ENCODE measurements at regions of chr17 and their contacts with region 1.

Region 1: DNA sequence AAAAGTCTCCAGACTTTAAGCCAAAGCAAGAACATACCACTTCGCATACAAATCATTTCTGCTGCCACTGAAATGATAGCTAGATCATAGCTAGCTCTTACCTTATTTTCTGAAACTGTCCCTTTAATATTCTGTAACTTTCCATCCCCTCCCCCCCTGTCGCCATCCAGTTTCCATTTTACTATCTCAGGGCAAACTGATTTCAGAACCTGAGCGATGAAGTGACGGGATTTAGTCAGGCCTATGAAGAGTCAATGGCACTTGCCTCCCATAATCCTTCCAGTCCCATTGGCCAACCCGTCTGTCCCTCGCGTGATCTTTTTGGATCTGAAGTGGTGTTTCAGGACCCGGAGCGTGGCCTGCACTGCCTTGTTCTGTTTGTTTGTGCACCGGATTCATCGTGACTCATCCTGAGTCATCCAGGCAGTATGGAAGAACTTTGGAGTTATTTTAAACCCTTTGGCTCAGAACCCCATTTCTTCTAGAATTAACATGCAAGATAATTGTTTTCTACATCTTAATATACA is 199.8 kb upstream of the CHMP6 start:
- DNase-seq: peak in 6 of 14 experiments; percentile 19 to 70 (median 47)
- ATAC-seq: peak; percentile 17
- H3K4me3 ChIP-seq: peak overlapping the region; percentile 17
- H3K4me3 Mint-ChIP-seq: peak overlapping the region; percentile 83
- H3K27ac ChIP-seq: peak overlapping the region; percentile 22 to 73
- H3K27ac Mint-ChIP-seq: peak overlapping the region; percentile 99
- H3K4me1 ChIP-seq: peaks cover 57% of the 10 kb centered on the region
- H3K4me1 Mint-ChIP-seq: peaks cover 81% of the 10 kb centered on the region
- H3K27me3 ChIP-seq: no peaks in the 10 kb centered on the region
- H3K27me3 Mint-ChIP-seq: no peaks in the 10 kb centered on the region
- CTCF ChIP-seq: no peak

Region 2: DNA sequence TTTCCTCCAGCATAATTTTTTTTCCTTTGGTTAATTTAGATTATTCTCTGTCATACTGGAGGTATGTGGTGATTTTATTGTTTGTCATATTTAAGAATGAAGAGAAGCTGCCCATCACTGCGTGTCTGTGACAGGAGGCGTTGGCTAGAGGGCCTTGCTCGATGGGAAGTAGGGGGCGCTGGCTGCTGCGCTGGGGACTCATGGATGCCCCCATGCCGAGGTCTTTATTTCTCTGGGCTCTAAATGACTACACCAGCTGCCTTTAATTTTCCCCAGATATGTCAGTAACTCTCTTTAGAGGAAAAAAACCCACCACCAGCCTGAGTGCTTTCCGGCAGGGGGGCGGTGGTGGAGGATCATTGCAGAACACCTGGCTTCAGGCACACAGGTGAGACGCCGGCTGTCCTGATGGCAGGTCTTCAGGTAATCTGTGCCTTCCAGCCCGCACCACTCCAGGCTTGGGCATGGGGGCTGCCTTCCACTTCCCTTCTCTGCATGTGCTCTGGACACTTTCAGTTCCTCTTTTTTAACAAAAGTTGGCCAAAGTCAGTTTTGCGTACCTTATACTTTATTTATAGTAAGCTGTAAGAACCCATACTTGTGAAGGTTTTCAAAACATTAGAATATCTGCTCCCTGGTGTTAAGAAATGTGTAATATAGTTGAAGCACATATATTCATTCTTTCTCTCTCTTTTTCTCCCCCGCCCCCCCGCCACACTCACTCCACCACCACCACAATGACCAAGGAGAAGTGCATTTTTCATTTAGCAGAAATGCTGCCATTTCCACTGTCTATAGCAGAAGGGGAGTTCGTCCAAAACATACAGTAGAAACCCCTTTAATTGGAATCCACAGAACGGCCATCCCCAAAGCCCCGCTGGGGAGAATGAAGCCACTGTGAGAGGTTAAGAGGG is 54.5 kb before region 1 on chr17:
- CTCF ChIA-PET with region 1: no interaction called
- POLR2A ChIA-PET with region 1: interaction called, 4 read pairs
- intact Hi-C with region 1: loop called in 1 of 2 experiments (anchors 10 kb)
- DNase-seq: peak in 1 of 14 experiments; percentile 40
- ATAC-seq: no peak
- H3K4me3 ChIP-seq: no peak overlapping the region
- H3K4me3 Mint-ChIP-seq: no peak overlapping the region
- H3K27ac ChIP-seq: no peak overlapping the region
- H3K27ac Mint-ChIP-seq: peak overlapping the region; percentile 65
- H3K4me1 ChIP-seq: peaks cover 22% of the 10 kb centered on the region
- H3K4me1 Mint-ChIP-seq: peaks cover 57% of the 10 kb centered on the region
- H3K27me3 ChIP-seq: no peaks in the 10 kb centered on the region
- H3K27me3 Mint-ChIP-seq: no peaks in the 10 kb centered on the region
- CTCF ChIP-seq: no peak

Region 3: DNA sequence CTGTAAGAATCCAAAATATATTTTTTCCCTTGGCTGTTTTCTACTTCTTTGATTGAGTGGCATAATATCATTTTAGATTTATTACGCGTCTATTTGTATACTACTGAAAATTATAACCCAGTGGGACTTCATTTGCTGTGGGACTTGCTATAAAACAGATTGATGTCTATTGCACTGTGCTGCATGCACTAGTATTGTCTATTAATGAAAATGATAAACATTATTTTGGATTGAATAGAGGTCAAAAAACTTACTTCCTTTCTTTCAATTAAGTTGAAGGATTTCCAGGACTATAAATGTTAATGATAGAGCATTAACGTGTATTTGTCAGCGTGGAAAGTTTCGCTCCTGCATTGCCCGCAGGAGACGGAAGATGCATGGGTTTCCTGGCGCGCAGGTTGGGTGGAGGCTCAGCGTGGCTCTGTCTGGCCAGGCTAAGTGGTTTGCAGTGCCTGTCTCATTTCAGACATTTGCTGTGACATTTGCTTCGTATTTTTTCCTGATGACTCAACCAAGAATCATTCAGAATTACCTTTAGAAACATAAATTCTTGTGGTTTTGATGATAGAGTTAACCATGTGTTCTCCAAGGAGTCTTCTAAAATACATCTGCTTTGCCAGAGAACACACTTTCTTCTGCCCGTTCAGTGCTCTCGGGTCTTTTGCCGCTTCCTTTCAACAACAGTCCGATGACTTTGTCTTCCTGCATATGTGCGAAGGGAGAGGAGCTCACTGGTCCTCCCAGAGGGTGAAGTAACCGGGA is 30.5 kb before region 1 on chr17:
- CTCF ChIA-PET with region 1: interaction called, 6 read pairs
- POLR2A ChIA-PET with region 1: interaction called, 8 read pairs
- intact Hi-C with region 1: loop called in 1 of 2 experiments (anchors 2 kb)
- DNase-seq: peak; percentile 22 to 85 (median 68)
- ATAC-seq: peak; percentile 74
- H3K4me3 ChIP-seq: peak overlapping the region; percentile 7
- H3K4me3 Mint-ChIP-seq: peak overlapping the region; percentile 81
- H3K27ac ChIP-seq: peak overlapping the region; percentile 49 to 67
- H3K27ac Mint-ChIP-seq: peak overlapping the region; percentile 91
- H3K4me1 ChIP-seq: peaks cover 67% of the 10 kb centered on the region
- H3K4me1 Mint-ChIP-seq: peaks cover 84% of the 10 kb centered on the region
- H3K27me3 ChIP-seq: no peaks in the 10 kb centered on the region
- H3K27me3 Mint-ChIP-seq: no peaks in the 10 kb centered on the region
- CTCF ChIP-seq: no peak

Region 4: GRCh38 chr17:80773243-80773991 is 18.4 kb before region 1 on chr17:
- CTCF ChIA-PET with region 1: no interaction called
- POLR2A ChIA-PET with region 1: interaction called, 41 read pairs
- intact Hi-C with region 1: no loop called
- DNase-seq: peak in 1 of 14 experiments; percentile 45
- ATAC-seq: peak; percentile 81
- H3K4me3 ChIP-seq: no peak overlapping the region
- H3K4me3 Mint-ChIP-seq: peak overlapping the region; percentile 70
- H3K27ac ChIP-seq: no peak overlapping the region
- H3K27ac Mint-ChIP-seq: peak overlapping the region; percentile 91
- H3K4me1 ChIP-seq: peaks cover 39% of the 10 kb centered on the region
- H3K4me1 Mint-ChIP-seq: peaks cover 84% of the 10 kb centered on the region
- H3K27me3 ChIP-seq: no peaks in the 10 kb centered on the region
- H3K27me3 Mint-ChIP-seq: no peaks in the 10 kb centered on the region
- CTCF ChIP-seq: no peak

Region 5: DNA sequence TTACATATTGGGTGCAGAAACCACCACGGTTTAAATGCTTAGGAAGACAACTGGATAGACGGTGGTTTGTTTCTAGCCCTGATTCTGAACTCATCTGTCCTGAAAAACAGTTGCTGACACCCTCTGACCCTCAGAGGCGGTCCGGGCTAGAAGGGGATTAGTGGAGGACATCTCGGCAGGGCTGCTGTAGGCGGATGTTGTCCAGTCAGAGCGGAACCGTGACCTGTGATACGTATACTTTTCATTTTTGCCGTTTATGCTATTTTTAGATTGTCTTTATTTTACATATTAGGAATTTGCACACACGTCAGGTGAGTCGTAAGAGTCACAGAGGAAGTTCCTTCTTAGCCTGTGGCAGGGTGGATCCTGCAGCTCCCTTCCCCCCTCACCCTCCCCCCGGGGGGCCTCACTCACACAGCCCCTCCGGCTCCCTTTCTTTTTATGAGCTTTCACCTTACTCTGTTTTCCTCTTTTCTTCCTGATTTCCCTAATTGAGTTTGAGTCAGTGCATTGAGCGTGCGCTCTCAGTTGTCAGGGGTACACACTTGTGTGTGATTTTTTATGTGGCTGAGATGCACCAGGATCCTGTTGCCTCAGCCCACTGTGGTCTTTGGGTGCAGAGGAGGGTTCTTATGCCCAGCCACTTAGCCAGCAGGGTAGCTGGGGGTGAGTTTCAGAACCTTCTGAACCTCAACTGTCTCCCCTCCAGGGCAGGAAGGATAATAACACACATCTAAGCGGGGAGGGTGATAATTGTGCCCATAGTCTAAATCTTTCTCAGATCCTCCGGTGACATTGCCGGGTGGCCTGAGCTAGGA is 11.2 kb before region 1 on chr17:
- CTCF ChIA-PET with region 1: interaction called, 6 read pairs
- POLR2A ChIA-PET with region 1: interaction called, 57 read pairs
- intact Hi-C with region 1: loop called in 1 of 2 experiments (anchors 1 kb)
- DNase-seq: peak in 3 of 14 experiments; percentile 50 to 67 (median 50)
- ATAC-seq: peak; percentile 54
- H3K4me3 ChIP-seq: peak overlapping the region; percentile 32
- H3K4me3 Mint-ChIP-seq: peak overlapping the region; percentile 36
- H3K27ac ChIP-seq: peak overlapping the region; percentile 55 to 75
- H3K27ac Mint-ChIP-seq: peak overlapping the region; percentile 85
- H3K4me1 ChIP-seq: peaks cover 58% of the 10 kb centered on the region
- H3K4me1 Mint-ChIP-seq: peaks cover 76% of the 10 kb centered on the region
- H3K27me3 ChIP-seq: no peaks in the 10 kb centered on the region
- H3K27me3 Mint-ChIP-seq: no peaks in the 10 kb centered on the region
- CTCF ChIP-seq: no peak

Region 6: DNA sequence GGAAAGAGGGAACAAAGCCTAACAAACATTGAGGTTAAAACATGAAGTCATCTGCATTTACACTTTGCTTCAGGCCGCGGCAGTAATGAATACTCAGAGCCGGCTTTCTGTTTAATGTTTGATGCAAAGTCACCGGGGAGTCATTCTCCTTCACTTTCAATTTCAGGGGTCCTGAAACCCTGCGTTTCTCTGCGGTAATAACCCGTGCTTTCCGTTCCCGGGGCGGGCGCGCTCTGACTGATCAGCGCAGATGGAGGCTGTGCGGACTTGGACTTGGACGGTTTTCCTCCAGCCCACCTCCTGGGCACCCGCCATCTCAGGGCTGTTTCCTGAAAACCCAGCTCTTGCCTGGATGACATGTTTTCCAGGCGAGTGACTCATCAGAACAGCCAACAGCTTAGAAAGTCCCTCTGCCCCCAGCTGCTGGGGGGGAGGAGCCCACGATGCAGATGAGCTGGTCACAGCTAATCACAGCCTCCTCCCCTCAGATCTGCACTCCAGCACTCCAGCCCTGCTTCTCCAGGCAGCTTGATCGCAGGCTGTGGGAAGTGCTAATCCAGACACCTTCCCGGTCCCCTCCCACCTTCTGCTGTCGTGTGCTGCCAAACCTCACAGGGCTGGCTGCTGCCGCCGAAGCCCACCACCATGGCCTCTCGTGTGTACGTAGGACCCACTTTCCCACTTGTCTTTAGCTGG is 41.2 kb after region 1 on chr17:
- CTCF ChIA-PET with region 1: no interaction called
- POLR2A ChIA-PET with region 1: interaction called, 10 read pairs
- intact Hi-C with region 1: loop called in 1 of 2 experiments (anchors 5 kb)
- DNase-seq: peak; percentile 43 to 87 (median 66)
- ATAC-seq: peak; percentile 92
- H3K4me3 ChIP-seq: peak overlapping the region; percentile 55
- H3K4me3 Mint-ChIP-seq: peak overlapping the region; percentile 74
- H3K27ac ChIP-seq: peak overlapping the region; percentile 70 to 73
- H3K27ac Mint-ChIP-seq: peak overlapping the region; percentile 90
- H3K4me1 ChIP-seq: peaks cover 23% of the 10 kb centered on the region
- H3K4me1 Mint-ChIP-seq: peaks cover 35% of the 10 kb centered on the region
- H3K27me3 ChIP-seq: no peaks in the 10 kb centered on the region
- H3K27me3 Mint-ChIP-seq: no peaks in the 10 kb centered on the region
- CTCF ChIP-seq: no peak

Region 7: DNA sequence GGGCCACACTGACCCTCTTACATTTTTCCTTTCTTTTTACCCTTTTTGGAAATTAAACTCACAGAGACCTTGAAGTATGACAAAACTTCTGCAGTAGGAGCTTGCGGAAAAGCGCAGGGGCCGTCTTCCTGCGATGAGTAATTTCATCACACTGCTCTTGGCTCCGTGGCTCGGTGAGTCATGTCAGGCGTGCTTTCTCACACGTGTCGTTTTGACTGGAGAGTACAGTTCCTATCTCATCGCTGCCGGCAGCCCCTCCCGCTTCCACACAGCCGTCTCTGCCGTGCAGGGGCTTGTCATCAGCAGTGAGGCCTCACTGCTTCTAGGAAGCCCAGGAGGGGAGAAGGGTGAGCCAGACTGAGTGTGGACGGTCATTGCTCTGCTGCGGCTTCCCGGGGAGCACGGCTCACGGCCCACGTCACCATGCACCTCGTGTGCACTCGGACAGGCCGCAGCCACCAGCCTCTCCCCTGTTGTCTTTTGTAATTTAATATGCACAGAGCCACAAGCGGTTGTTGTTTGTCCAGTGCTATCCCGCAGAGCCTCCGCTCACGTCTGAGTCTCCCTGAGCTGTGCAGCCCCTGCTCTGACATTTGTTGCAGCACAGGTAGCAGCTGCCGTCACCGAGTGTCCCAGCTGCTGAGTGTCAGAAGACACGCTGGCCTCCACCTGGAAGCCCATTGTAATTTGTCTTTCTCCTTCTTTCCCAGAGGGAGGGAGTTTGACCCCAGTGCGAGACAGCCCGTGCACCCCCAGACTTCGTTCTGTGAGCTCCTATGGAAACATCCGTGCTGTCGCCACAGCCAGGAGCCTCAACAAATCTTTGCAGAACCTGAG is 100.4 kb after region 1 on chr17:
- CTCF ChIA-PET with region 1: no interaction called
- POLR2A ChIA-PET with region 1: interaction called, 6 read pairs
- intact Hi-C with region 1: loop called in 1 of 2 experiments (anchors 10 kb)
- DNase-seq: peak; percentile 61 to 92 (median 80)
- ATAC-seq: peak; percentile 77
- H3K4me3 ChIP-seq: peak overlapping the region; percentile 37
- H3K4me3 Mint-ChIP-seq: peak overlapping the region; percentile 75
- H3K27ac ChIP-seq: peak overlapping the region; percentile 80 to 82
- H3K27ac Mint-ChIP-seq: peak overlapping the region; percentile 93
- H3K4me1 ChIP-seq: peaks cover 63% of the 10 kb centered on the region
- H3K4me1 Mint-ChIP-seq: peaks cover 50% of the 10 kb centered on the region
- H3K27me3 ChIP-seq: no peaks in the 10 kb centered on the region
- H3K27me3 Mint-ChIP-seq: no peaks in the 10 kb centered on the region
- CTCF ChIP-seq: no peak

Measured in CD4-positive, alpha-beta T cell (primary cell).